H1 (cell line): ENCODE measurements at regions of chr19 and their contacts with region 1.

Region 1: DNA sequence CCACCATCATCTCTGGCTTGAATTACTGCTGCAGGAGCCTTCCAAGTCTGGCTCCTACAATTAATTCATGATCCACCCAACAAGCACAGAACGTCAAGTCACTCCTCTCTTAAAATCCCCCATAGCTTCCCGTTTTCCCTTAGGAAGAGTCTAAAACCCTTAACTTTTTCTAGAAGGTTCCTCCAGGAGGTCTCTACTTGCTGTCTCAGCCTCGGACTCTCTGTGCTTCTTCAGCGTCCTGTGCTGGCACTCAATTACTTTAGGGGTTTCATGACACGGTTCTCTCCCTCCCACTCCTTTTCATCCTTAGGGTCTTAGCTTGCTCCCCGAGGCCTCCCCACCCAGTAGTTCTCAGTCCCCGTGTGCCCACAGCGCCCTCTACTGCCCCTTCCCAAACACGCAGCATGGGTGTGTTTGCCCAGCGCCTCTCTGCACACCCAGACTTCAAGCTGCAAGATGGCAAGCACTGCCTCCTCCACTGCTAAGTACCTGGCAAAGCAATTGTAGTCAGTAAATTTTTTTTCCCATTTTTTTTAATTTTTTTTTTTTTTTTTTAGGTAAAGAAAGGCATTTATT is 25.8 kb upstream of the MAP3K10 start:
- DNase-seq: peak; percentile 61 to 92
- H3K4me3 ChIP-seq: no peak overlapping the region
- H3K27ac ChIP-seq: no peak overlapping the region
- H3K4me1 ChIP-seq: no peaks in the 10 kb centered on the region
- H3K27me3 ChIP-seq: no peaks in the 10 kb centered on the region; a peak in 1 of 7 replicates
- CTCF ChIP-seq: peak; percentile 93 to 97 (median 93)
- EP300 ChIP-seq: no peak
- POLR2A ChIP-seq: no peak
- RAD21 ChIP-seq: peak; percentile 85 to 91

Region 2: DNA sequence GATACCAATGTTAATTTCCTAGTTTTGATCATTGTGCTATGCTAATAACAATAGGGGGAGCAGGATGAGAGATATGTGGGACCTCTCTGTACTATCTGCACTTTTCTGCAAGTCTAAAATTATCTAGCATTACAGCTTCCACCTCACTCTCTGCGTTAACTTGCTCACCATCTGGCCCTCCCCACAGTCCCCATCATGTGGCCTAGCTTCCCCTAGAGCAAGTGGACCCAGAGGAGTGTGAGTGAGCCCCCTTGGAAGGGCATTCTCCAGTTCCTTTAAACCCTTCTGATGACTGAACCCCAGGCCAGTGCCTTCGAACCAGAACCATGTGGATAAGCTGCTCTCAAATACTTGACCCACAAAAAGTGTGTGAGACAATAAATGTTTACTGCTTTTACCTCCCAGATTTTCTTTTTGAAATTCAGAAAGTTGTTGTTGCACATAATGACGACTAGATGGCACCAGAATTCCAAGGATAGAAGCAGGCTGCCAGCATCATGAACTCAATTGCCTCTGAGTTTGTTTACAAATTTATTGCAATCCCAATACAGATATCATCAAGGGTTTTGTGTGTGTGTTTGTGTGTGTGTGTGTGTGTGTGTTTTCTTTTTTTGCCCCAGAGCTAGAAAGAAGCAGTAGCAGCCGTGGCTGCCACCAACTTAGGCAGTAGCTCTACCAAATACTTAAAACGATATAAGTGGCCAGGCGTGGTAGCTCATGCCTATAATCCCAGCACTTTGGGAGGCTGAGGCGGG is 25.7 kb before region 1 on chr19:
- CTCF ChIA-PET with region 1: interaction called, 37 read pairs
- POLR2A ChIA-PET with region 1: interaction called, 3 read pairs
- DNase-seq: peak in 1 of 2 experiments; percentile 47
- H3K4me3 ChIP-seq: no peak overlapping the region
- H3K27ac ChIP-seq: no peak overlapping the region
- H3K4me1 ChIP-seq: no peaks in the 10 kb centered on the region
- H3K27me3 ChIP-seq: no peaks in the 10 kb centered on the region; a peak in 1 of 7 replicates
- CTCF ChIP-seq: peak in 2 of 3 experiments; percentile 66 to 69; a peak in 3 of 4 replicates
- EP300 ChIP-seq: no peak
- POLR2A ChIP-seq: no peak
- RAD21 ChIP-seq: peak; percentile 94 to 96

Region 3: GRCh38 chr19:40147693-40148347 is 17.6 kb before region 1 on chr19:
- CTCF ChIA-PET with region 1: interaction called, 32 read pairs
- POLR2A ChIA-PET with region 1: interaction called, 3 read pairs
- DNase-seq: no peak
- H3K4me3 ChIP-seq: no peak overlapping the region
- H3K27ac ChIP-seq: no peak overlapping the region
- H3K4me1 ChIP-seq: no peaks in the 10 kb centered on the region
- H3K27me3 ChIP-seq: no peaks in the 10 kb centered on the region
- CTCF ChIP-seq: no peak
- EP300 ChIP-seq: no peak
- POLR2A ChIP-seq: no peak
- RAD21 ChIP-seq: no peak

Region 4: DNA sequence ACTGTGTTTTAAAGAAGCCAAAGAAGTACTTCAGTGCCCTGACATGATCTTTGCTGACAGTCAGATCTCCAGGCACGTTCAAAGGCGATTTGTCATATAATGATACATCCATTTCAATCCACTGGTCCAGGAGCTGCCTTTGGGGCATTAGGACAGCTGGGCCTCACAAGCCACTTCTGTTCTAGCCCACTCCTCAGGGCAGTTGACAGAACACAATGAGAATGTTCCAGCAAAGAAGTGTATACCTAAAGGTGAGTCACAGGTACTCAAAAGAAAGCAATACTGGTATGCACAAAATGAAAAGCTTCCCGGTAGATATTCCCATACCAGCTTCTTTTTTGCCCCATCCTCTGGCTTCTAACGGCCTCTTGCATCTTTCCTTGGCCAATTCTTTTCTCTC is 13.3 kb after region 1 on chr19:
- CTCF ChIA-PET with region 1: interaction called, 53 read pairs
- POLR2A ChIA-PET with region 1: interaction called, 3 read pairs
- DNase-seq: no peak
- H3K4me3 ChIP-seq: no peak overlapping the region
- H3K27ac ChIP-seq: no peak overlapping the region
- H3K4me1 ChIP-seq: no peaks in the 10 kb centered on the region; a peak in 1 of 7 replicates
- H3K27me3 ChIP-seq: no peaks in the 10 kb centered on the region
- CTCF ChIP-seq: no peak
- EP300 ChIP-seq: no peak
- POLR2A ChIP-seq: no peak
- RAD21 ChIP-seq: no peak

Region 5: DNA sequence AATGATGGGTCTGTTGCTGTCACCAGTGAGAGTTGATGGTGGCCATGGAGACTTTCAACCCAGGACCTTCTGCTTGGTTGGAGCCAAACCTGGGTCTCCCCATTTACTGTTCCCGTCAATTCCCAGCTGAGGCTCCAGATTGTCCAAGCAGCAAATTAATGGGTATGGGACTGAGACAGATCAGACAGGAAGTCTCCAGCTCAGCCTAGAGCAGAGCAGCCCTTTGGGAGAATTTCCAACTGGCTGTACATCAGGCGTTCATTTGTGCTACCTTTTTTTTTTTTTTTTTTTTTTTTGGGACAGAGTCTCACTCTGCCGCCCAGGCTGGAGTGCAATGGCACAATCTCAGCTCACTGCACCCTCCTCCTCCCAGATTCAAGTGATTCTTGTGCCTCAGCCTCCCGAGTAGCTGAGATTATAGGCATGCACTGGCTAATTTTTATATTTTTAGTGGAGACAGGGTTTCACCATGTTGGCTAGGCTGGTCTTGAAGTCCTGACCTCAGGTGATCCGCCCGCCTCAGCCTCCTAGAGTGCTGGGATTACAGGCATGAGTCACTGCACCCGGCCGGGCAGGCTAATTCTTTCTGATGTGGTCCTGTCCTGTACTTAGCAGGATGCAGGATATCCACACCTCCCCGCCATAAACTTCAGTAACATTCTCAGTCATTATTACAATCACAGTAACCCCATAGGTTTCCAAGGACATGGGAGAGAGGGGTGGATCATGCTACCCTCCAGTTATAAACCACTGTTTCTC is 35.1 kb after region 1 on chr19:
- CTCF ChIA-PET with region 1: interaction called, 11 read pairs
- POLR2A ChIA-PET with region 1: no interaction called
- DNase-seq: no peak
- H3K4me3 ChIP-seq: no peak overlapping the region
- H3K27ac ChIP-seq: no peak overlapping the region
- H3K4me1 ChIP-seq: no peaks in the 10 kb centered on the region
- H3K27me3 ChIP-seq: no peaks in the 10 kb centered on the region
- CTCF ChIP-seq: no peak
- EP300 ChIP-seq: no peak
- POLR2A ChIP-seq: no peak
- RAD21 ChIP-seq: no peak